PC-3 (cell line): ENCODE measurements at regions of chr4 and their contacts with region 1.

Region 1: DNA sequence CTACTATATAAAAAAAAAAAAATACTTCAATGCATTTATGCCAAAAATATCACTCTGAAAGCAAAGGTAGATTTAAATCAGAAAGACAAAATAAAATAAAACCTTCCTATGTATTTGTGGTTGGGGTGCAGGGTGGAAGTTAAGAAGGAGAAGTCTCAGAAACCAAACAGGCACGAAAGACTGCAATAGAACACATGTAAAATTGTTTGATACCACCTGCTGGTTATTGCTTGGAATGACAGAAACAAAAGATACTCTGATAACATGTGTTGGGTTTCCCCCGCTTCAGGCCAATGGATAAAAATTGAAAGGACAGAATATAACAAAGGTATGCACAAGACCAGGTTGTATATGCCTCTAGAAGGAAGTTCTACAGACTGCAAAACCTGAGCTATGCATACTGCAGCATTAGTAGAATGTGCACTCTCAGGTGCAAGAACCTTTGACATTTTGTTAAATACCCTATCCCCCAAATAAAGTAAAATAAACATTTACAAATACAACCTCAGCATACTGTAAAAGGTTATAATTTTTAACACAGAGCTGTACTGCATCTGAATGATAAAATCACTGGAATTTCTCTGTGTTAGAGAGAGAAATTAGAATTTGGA is 118.8 kb downstream of the GABRA2 start:
- DNase-seq: peak; percentile 38
- ATAC-seq: no peak
- H3K4me3 ChIP-seq: no peak overlapping the region
- H3K27ac ChIP-seq: no peak overlapping the region
- H3K4me1 ChIP-seq: no peaks in the 10 kb centered on the region
- H3K27me3 ChIP-seq: no peaks in the 10 kb centered on the region
- CTCF ChIP-seq: peak; percentile 59

Region 2: DNA sequence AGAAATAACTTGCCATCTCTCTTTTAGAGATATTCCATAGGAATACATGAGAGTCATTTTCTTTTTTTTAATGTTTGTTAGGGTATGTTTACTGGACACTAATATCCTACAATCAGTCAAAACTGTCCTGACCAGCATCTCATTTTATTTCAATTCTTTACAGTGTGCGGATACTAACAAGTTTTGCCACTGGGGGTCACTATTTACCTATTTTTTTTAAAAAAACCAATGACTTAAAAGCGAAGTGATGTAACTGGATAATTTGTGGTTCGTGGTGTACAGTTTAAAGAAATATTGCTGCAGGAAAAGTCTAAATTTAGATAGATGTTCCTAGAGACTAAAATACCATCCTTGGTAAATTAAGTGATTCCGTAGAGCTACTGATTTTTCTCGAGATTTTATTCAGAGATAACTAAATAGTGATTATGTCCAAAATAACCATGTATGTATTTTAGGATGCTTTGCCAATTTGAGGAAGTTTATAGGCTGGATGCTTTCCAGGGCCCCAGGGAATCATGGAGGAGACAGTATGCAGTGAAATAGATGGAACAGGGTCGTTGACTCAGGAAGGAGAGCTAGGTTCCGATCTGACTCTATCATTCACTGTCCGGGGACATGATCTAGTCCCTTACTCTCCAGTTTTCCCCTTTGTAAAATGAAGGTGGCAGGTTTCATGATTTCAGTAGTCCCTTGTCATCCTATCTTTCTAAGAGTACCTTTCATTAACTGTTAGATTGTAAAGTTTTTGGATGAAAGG is 1510.8 kb before region 1 on chr4:
- CTCF ChIA-PET with region 1: no interaction called
- POLR2A ChIA-PET with region 1: no interaction called
- intact Hi-C with region 1: loop called (anchors 2 kb)
- DNase-seq: peak; percentile 46
- ATAC-seq: peak; percentile 43
- H3K4me3 ChIP-seq: no peak overlapping the region
- H3K27ac ChIP-seq: no peak overlapping the region
- H3K4me1 ChIP-seq: no peaks in the 10 kb centered on the region
- H3K27me3 ChIP-seq: no peaks in the 10 kb centered on the region
- CTCF ChIP-seq: peak; percentile 63

Region 3: GRCh38 chr4:45453258-45453853 is 817.7 kb before region 1 on chr4:
- CTCF ChIA-PET with region 1: no interaction called
- POLR2A ChIA-PET with region 1: no interaction called
- intact Hi-C with region 1: loop called (anchors 1 kb)
- DNase-seq: peak; percentile 55
- ATAC-seq: peak; percentile 91
- H3K4me3 ChIP-seq: no peak overlapping the region
- H3K27ac ChIP-seq: no peak overlapping the region
- H3K4me1 ChIP-seq: no peaks in the 10 kb centered on the region
- H3K27me3 ChIP-seq: no peaks in the 10 kb centered on the region
- CTCF ChIP-seq: peak; percentile 61

Region 4: GRCh38 chr4:45550766-45551366 is 720.2 kb before region 1 on chr4:
- CTCF ChIA-PET with region 1: no interaction called
- POLR2A ChIA-PET with region 1: no interaction called
- intact Hi-C with region 1: loop called (anchors 10 kb)
- DNase-seq: peak; percentile 1
- ATAC-seq: no peak
- H3K4me3 ChIP-seq: no peak overlapping the region
- H3K27ac ChIP-seq: no peak overlapping the region
- H3K4me1 ChIP-seq: no peaks in the 10 kb centered on the region
- H3K27me3 ChIP-seq: no peaks in the 10 kb centered on the region
- CTCF ChIP-seq: no peak; the same call in 1 of the 2 replicates